ENCODE measurements at regions of chr20 and their contacts with region 1.

Region 1: GRCh38 chr20:38962044-38962927 is at the start of gene DHX35:
- DNase-seq: peak; percentile 100
- total RNA-seq, gene DHX35: 12.1 to 13.9 TPM

Region 2: DNA sequence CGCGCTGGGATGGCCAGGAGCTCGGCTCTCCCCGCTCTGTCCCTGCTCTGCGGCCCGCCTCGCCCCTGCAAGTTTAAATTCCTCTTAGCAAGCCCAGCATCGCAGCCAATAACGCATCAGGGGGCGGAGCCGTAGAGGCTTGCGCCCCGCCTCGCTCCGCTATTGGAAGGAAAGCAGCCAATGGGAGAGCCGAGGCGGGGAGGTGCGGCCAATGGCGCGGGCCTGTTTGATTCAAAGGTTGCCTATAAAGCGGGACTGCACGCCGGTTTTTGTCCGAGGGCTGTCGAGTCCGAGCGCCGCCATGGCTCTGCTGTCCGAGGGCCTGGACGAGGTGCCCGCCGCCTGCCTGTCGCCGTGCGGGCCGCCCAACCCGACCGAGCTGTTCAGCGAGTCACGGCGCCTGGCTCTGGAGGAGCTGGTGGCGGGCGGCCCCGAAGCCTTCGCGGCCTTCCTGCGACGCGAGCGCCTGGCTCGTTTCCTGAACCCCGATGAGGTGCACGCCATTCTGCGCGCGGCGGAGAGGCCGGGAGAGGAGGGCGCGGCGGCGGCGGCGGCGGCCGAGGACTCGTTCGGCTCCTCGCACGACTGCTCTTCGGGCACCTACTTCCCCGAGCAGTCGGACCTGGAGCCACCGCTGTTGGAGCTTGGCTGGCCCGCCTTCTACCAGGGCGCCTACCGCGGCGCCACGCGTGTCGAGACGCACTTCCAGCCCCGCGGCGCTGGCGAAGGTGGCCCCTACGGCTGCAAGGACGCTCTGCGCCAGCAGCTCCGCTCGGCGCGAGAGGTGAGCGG is 35.9 kb before region 1 on chr20 and contains the start of gene FAM83D:
- intact Hi-C with region 1: loop called in 1 of 2 experiments (anchors 5 kb)
- DNase-seq: peak; percentile 99
- total RNA-seq, gene FAM83D: 72.1 to 94.3 TPM